Heart right ventricle (tissue), 16 donors: ENCODE measurements at regions of chr9 and their contacts with region 1.

Region 1: DNA sequence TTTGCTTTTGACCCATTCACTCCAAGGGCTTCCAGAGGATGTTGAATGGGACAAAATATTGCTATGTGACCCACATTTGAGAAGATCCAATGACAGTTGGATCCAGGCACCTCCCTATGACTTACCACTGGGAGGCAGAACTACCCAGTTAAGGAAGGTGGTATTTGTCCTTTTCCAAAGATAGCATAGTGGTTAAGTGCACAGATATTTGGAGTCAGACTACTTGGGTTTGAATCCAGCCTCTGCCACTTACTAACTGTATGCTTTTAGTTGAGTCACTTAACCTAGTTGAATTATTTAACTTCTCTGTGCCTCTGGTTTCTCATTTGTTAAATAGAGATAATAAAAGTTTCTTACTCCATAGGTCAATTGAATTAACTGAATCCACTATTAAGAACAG is 74.5 kb upstream of the PALM2AKAP2 start:
- DNase-seq: no peak
- ATAC-seq: peak in 1 of 8 donors; percentile 10
- H3K4me3 ChIP-seq: no peak overlapping the region
- H3K27ac ChIP-seq: no peak overlapping the region
- H3K4me1 ChIP-seq: peaks cover 6 to 34% (median 20%) of the 10 kb centered on the region in 9 donors
- H3K27me3 ChIP-seq: no peaks in the 10 kb centered on the region
- CTCF ChIP-seq: peak in 2 of 9 donors; percentile 21 to 30

Region 2: GRCh38 chr9:109766336-109766735 is 60.8 kb after region 1 on chr9:
- intact Hi-C with region 1: no loop called
- DNase-seq: no peak
- ATAC-seq: peak in 2 of 8 donors; percentile 7 to 20
- H3K4me3 ChIP-seq: no peak overlapping the region
- H3K27ac ChIP-seq: no peak overlapping the region
- H3K4me1 ChIP-seq: peaks cover 0 to 33% (median 5%) of the 10 kb centered on the region in 9 donors
- H3K27me3 ChIP-seq: peaks cover 0 to 11% (median 0%) of the 10 kb centered on the region in 7 donors
- CTCF ChIP-seq: no peak

Region 3: GRCh38 chr9:109817846-109818472 is 112.4 kb after region 1 on chr9:
- intact Hi-C with region 1: loop called in 3 of 10 experiments (anchors 5 to 10 kb)
- DNase-seq: peak in 1 of 2 donors; percentile 92
- ATAC-seq: peak; percentile 62 to 91 (median 86)
- H3K4me3 ChIP-seq: peak overlapping the region in 3 of 10 donors; percentile 5 to 17 (median 15)
- H3K27ac ChIP-seq: peak overlapping the region; percentile 9 to 83 (median 70)
- H3K4me1 ChIP-seq: peaks cover 5 to 37% (median 32%) of the 10 kb centered on the region in 9 donors
- H3K27me3 ChIP-seq: no peaks in the 10 kb centered on the region
- CTCF ChIP-seq: peak; percentile 78 to 89 (median 83)

Region 4: GRCh38 chr9:109868207-109868606 is 162.7 kb after region 1 on chr9:
- intact Hi-C with region 1: loop called in 1 of 10 experiments (anchors 5 kb)
- DNase-seq: peak in 1 of 2 donors; percentile 16
- ATAC-seq: peak in 6 of 8 donors; percentile 40 to 71 (median 61)
- H3K4me3 ChIP-seq: peak overlapping the region in 5 of 10 donors; percentile 14 to 36 (median 35)
- H3K27ac ChIP-seq: peak overlapping the region; percentile 46 to 89 (median 84)
- H3K4me1 ChIP-seq: peaks cover 0 to 75% (median 21%) of the 10 kb centered on the region in 9 donors
- H3K27me3 ChIP-seq: peaks cover 0 to 3% (median 0%) of the 10 kb centered on the region in 7 donors
- CTCF ChIP-seq: no peak

Region 5: GRCh38 chr9:109894921-109895758 is 189.6 kb after region 1 on chr9:
- intact Hi-C with region 1: loop called in 1 of 10 experiments (anchors 10 kb)
- DNase-seq: peak in 1 of 2 donors; percentile 47
- ATAC-seq: peak in 7 of 8 donors; percentile 28 to 77 (median 64)
- H3K4me3 ChIP-seq: no peak overlapping the region
- H3K27ac ChIP-seq: peak overlapping the region in 7 of 10 donors; percentile 17 to 74 (median 50)
- H3K4me1 ChIP-seq: peaks cover 0 to 37% (median 16%) of the 10 kb centered on the region in 9 donors
- H3K27me3 ChIP-seq: no peaks in the 10 kb centered on the region
- CTCF ChIP-seq: no peak